WTC11 (cell line): ENCODE measurements at regions of chr12 and their contacts with region 1.

Region 1: DNA sequence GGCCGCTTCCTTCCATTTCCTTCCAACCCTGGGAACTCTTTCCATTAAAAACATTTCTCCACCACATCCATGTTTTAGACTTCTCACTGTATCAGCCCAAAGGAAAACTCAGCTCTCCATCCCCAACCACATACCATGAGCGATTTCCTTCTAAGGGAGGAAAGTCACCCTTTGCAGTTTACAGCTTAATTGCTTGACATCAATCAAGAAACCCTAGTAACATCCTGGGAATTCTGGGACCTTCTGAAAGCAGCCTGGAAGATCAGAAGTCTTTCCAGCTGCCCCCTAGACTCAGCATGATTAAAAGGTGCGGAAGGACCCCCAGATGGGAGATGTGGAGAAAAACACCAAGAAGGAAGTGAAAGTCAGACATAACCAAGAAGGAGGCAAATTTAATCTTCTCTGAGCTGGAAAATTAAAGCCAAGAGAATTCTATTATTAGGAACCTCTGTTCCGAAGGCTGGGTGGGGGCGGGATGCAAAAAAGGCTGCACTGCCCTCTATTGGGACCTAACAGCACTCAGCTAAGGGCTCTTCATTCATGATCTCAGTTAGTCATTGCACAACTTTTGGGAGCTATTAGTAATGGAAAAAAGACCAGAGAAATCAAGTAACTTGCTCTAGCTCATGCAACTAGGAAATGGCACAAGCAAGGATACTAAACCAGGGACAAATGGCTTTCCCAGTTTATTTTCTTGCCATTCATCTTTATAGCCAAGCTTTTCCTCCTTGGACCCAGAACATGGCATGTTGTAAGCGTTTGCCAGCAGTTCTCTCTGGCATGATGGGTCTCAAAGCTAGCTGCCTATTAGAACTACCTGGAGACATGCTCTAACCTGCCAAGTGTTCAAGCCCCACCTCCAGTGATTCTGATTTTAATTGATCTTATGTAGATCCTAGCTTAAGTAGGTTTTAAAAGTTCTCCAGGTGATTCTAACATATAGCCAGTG is 73.1 kb upstream of the PLXNC1 start:
- DNase-seq: no peak
- ATAC-seq: peak; percentile 85
- H3K4me3 Mint-ChIP-seq: no peak overlapping the region
- H3K27ac Mint-ChIP-seq: no peak overlapping the region
- H3K4me1 Mint-ChIP-seq: peaks cover 17% of the 10 kb centered on the region
- H3K27me3 Mint-ChIP-seq: no peaks in the 10 kb centered on the region
- CTCF ChIP-seq: 0 out of 2 replicates have a peak, but pooled peaks have one; percentile 24

Region 2: DNA sequence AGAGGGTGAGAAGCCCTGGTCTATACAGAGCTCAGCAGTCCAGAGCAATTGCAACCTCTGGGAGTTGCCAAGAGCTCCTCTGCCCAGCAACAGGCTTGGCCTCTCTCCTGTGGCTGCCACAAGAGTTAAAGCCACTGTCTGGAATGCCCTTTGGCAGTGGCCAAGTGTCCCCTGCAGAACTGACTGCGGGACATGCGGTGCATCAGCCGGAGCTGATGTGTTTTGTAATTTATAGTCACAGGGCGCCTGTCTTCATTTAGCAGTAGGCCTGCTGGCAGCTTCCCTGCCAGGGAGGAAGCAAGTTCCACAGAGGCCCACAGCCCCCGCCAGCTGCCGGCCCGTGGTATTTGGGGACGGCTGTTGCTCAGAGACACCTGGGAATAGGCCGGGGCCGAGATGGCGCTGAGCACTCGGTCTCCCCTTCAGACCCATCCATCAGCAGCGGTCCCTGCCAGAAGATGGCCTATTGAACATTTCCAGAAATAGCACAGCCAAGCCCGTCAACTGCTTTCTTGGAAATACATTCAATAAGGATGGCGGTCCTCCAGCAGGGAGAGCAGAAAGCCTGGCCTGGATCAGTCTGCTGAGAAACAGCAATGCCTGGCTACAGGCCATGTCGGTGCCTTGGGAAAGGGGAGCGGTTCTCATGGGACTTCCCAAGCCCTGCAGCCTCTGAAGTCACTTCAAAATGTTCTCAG is 180.7 kb before region 1 on chr12:
- CTCF ChIA-PET with region 1: interaction called, 22 read pairs
- POLR2A ChIA-PET with region 1: interaction called, 4 read pairs
- DNase-seq: no peak
- ATAC-seq: no peak; the same call in 1 of the 2 replicates
- H3K4me3 Mint-ChIP-seq: no peak overlapping the region
- H3K27ac Mint-ChIP-seq: no peak overlapping the region
- H3K4me1 Mint-ChIP-seq: peaks cover 37% of the 10 kb centered on the region
- H3K27me3 Mint-ChIP-seq: no peaks in the 10 kb centered on the region
- CTCF ChIP-seq: no peak

Region 3: DNA sequence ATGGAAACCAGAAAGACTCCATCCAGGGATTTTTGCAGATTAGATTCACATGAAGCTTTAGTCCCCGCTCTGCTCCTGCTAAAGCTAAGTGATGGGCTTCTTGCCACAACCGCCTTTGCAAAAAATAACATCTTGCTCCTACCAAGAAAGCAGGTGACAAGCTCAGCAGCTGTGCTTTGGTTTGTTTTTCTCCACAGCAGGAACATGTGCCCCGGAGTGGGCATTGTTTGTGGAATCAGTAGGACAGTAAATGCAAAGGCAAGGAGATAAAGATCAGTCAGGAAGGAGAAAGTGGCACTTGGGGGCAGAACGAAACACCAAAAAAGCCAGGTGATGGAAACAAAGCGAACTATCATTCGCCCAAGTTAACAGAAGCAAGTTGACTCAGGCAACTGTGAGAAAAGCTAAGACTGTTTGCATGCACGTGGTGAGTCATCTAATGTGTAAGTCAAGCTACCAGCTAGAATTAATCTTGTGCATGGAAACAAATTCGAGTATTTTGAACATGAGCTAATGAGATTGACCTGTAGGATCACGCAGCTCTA is 92.4 kb before region 1 on chr12:
- CTCF ChIA-PET with region 1: interaction called, 12 read pairs
- POLR2A ChIA-PET with region 1: no interaction called
- DNase-seq: no peak
- ATAC-seq: no peak
- H3K4me3 Mint-ChIP-seq: no peak overlapping the region
- H3K27ac Mint-ChIP-seq: no peak overlapping the region
- H3K4me1 Mint-ChIP-seq: peaks cover 4% of the 10 kb centered on the region
- H3K27me3 Mint-ChIP-seq: peaks cover 2% of the 10 kb centered on the region; the same call in 1 of the 2 replicates
- CTCF ChIP-seq: no peak

Region 4: GRCh38 chr12:93990832-93991803 is 84.1 kb before region 1 on chr12:
- CTCF ChIA-PET with region 1: interaction called, 31 read pairs
- POLR2A ChIA-PET with region 1: no interaction called
- DNase-seq: peak; percentile 57
- ATAC-seq: peak; percentile 99
- H3K4me3 Mint-ChIP-seq: no peak overlapping the region
- H3K27ac Mint-ChIP-seq: peak overlapping the region; percentile 8; the same call in 1 of the 2 replicates
- H3K4me1 Mint-ChIP-seq: peaks cover 15% of the 10 kb centered on the region
- H3K27me3 Mint-ChIP-seq: no peaks in the 10 kb centered on the region; the same call in 1 of the 2 replicates
- CTCF ChIP-seq: no peak

Region 5: GRCh38 chr12:94012590-94012989 is 62.7 kb before region 1 on chr12:
- CTCF ChIA-PET with region 1: interaction called, 15 read pairs
- POLR2A ChIA-PET with region 1: no interaction called
- DNase-seq: no peak
- ATAC-seq: no peak
- H3K4me3 Mint-ChIP-seq: no peak overlapping the region
- H3K27ac Mint-ChIP-seq: no peak overlapping the region
- H3K4me1 Mint-ChIP-seq: peaks cover 31% of the 10 kb centered on the region
- H3K27me3 Mint-ChIP-seq: peaks cover 7% of the 10 kb centered on the region
- CTCF ChIP-seq: no peak